ENCODE measurements at regions of chr14 and their contacts with region 1.

Region 1: GRCh38 chr14:102086972-102087761 is at the start of gene HSP90AA1:
- DNase-seq: peak; percentile 75 to 96
- H3K4me3 ChIP-seq: peak within 1 kb of the TSS; percentile 89 to 97
- H3K27ac ChIP-seq: peak within 1 kb of the TSS; percentile 98 to 100
- H3K4me1 ChIP-seq: peaks cover 13 to 37% of the 10 kb centered on the region in 2 donors
- H3K27me3 ChIP-seq: no peaks in the 10 kb centered on the region
- CTCF ChIP-seq: peak in 2 of 3 experiments; percentile 19 to 29
- total RNA-seq, gene HSP90AA1: 120 TPM

Region 2: DNA sequence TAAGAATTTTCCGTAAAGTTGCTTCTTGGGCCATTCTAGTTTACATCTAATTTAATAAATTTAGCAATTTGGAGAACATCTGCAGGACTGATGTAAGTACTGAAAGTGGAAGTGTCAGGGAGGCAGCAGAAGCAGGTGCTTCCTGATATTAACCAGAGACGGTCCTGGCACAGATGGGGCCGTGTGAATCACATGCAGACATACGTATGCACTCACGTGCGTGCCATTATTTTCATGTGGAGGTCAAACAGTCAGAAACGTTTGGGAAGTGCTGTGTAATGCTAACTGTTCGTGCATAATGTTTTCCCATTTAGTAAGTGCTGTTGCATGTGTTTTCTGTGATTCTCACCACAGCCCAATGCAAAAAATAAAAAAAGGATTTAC is 210.6 kb before region 1 on chr14:
- intact Hi-C with region 1: no loop called
- DNase-seq: peak; percentile 58 to 83
- H3K4me3 ChIP-seq: no peak overlapping the region
- H3K27ac ChIP-seq: no peak overlapping the region
- H3K4me1 ChIP-seq: peaks cover 0 to 3% of the 10 kb centered on the region in 2 donors
- H3K27me3 ChIP-seq: no peaks in the 10 kb centered on the region
- CTCF ChIP-seq: no peak

Region 3: DNA sequence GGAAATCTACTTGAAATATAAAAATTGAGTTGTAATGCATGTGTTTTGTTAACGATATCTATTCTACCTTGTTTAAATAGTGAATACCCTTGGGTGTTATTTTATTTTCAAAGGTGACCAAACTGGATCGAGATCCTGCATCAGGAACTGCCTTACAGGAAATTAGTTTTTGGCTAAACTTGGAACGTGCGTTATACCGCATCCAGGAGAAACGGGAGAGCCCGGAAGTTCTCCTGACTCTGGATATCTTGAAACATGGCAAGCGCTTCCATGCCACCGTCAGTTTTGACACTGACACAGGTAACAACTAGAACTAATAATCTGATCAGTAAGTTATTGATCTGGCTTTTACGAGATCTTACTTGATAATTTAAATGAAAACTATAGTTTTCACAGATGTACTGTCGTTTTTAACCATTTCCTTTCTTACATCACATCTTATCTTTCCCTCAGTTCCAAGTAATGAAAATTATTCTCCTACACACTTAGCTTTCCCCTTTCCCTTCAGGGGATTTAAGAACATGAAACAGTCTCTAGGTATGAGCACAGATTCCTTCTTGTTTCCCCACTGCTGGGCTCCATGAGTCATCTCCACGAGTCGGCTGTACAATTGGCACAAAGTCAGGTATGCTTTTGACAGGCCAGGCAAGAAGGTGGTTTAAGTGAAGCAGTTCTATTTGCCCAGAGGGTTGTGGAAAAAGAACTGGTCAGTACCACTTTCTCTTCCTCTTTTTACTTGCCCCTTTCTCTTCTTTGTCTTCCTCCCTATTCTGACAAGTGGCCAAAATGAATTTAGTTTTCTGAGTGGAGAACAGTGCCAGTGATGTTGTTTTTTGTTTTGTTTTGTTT is 106.7 kb before region 1 on chr14:
- intact Hi-C with region 1: no loop called
- DNase-seq: peak; percentile 66 to 91
- H3K4me3 ChIP-seq: no peak overlapping the region
- H3K27ac ChIP-seq: peak overlapping the region; percentile 30 to 67
- H3K4me1 ChIP-seq: peaks cover 3 to 4% of the 10 kb centered on the region in 2 donors
- H3K27me3 ChIP-seq: no peaks in the 10 kb centered on the region
- CTCF ChIP-seq: no peak

Region 4: DNA sequence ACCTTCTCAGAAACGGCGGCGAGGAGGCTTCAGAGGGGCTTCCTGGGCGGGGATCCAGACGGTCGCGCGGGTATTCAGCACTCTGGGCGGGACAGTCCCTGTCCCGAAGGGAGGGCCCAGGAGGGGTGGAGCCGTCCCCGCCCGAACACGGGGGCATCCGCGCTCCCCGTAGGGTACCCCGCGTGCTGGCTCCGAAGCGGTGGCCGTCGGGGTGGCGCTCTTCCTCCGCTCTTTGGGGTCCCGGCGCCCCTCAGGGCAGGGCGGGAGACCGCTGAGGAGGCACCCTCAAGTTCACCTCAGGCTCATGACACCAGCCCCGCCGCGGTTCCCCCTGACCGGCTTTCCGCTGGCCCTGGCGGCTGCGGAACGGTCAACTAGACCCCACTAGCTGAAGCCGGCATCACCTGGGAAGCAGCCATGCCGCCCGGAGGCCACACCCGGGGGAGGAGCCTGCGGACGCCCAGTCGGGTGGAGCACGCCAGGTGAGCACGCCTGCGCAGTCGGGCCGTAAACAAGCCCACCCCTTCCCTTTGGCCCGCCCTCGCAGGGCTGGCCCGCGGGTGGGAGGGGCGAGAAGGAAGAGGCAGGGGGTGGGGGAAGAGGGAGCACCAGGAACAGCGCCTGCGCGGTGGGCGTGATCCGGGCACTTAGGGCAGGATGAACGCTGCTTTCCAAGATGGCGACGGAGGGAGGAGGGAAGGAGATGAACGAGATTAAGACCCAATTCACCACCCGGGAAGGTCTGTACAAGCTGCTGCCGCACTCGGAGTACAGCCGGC is 52.3 kb after region 1 on chr14 and contains the start of gene WDR20:
- intact Hi-C with region 1: loop called (anchors 1 kb)
- DNase-seq: peak; percentile 90 to 98
- H3K4me3 ChIP-seq: peak within 1 kb of the TSS; percentile 96 to 99
- H3K27ac ChIP-seq: peak within 1 kb of the TSS; percentile 81 to 85
- H3K4me1 ChIP-seq: peaks cover 0 to 21% of the 10 kb centered on the region in 2 donors
- H3K27me3 ChIP-seq: no peaks in the 10 kb centered on the region
- CTCF ChIP-seq: no peak
- total RNA-seq, gene WDR20: 44.8 TPM

Region 5: GRCh38 chr14:102279688-102280348 is 192.7 kb after region 1 on chr14:
- intact Hi-C with region 1: no loop called
- DNase-seq: no peak
- H3K4me3 ChIP-seq: no peak overlapping the region
- H3K27ac ChIP-seq: peak overlapping the region in 1 of 2 donors; percentile 24
- H3K4me1 ChIP-seq: no peaks in the 10 kb centered on the region
- H3K27me3 ChIP-seq: no peaks in the 10 kb centered on the region
- CTCF ChIP-seq: no peak

Measured in ascending aorta (tissue), 2 donors.